ENCODE measurements at regions of chr11 and their contacts with region 1.

Region 1: GRCh38 chr11:101456812-101457211 is 127.0 kb downstream of the TRPC6 start:
- DNase-seq: no peak
- ATAC-seq: no peak
- H3K4me3 ChIP-seq: no peak overlapping the region
- H3K27ac ChIP-seq: no peak overlapping the region
- H3K4me1 ChIP-seq: no peaks in the 10 kb centered on the region
- H3K27me3 ChIP-seq: no peaks in the 10 kb centered on the region
- CTCF ChIP-seq: peak in 1 of 5 experiments; percentile 33
- POLR2A ChIP-seq: no peak

Region 2: GRCh38 chr11:101848262-101848661 is 391.4 kb after region 1 on chr11:
- in situ Hi-C with region 1: loop called in 2 of 4 experiments (anchors 25 kb)
- intact Hi-C with region 1: no loop called
- DNase-seq: no peak
- ATAC-seq: no peak
- H3K4me3 ChIP-seq: no peak overlapping the region
- H3K27ac ChIP-seq: no peak overlapping the region
- H3K4me1 ChIP-seq: no peaks in the 10 kb centered on the region
- H3K27me3 ChIP-seq: no peaks in the 10 kb centered on the region
- CTCF ChIP-seq: peak in 2 of 5 experiments; percentile 31 to 42
- POLR2A ChIP-seq: no peak

Region 3: GRCh38 chr11:102007567-102008437 is 551.0 kb after region 1 on chr11:
- in situ Hi-C with region 1: loop called in 1 of 4 experiments (anchors 25 kb)
- intact Hi-C with region 1: no loop called
- DNase-seq: no peak
- ATAC-seq: peak; percentile 59 to 82
- H3K4me3 ChIP-seq: no peak overlapping the region
- H3K27ac ChIP-seq: peak overlapping the region in 1 of 4 donors; percentile 23
- H3K4me1 ChIP-seq: peaks cover 3 to 4% of the 10 kb centered on the region in 2 donors
- H3K27me3 ChIP-seq: no peaks in the 10 kb centered on the region
- CTCF ChIP-seq: peak; percentile 29 to 61 (median 54)
- POLR2A ChIP-seq: no peak